ENCODE measurements at regions of chr3 and their contacts with region 1.

Region 1: GRCh38 chr3:51974963-51975851 is at the start of gene ABHD14A:
- DNase-seq: peak; percentile 85
- ATAC-seq: peak; percentile 78
- H3K4me3 ChIP-seq: peak within 1 kb of the TSS; percentile 71 to 98 (median 85)
- H3K4me3 Mint-ChIP-seq: peak within 1 kb of the TSS; percentile 100
- H3K27ac ChIP-seq: peak within 1 kb of the TSS; percentile 39 to 75
- H3K27ac Mint-ChIP-seq: peak within 1 kb of the TSS; percentile 95
- H3K4me1 ChIP-seq: peaks cover 14 to 23% of the 10 kb centered on the region in 2 donors
- H3K4me1 Mint-ChIP-seq: peaks cover 28% of the 10 kb centered on the region
- H3K27me3 ChIP-seq: no peaks in the 10 kb centered on the region
- H3K27me3 Mint-ChIP-seq: no peaks in the 10 kb centered on the region
- CTCF ChIP-seq: no peak
- total RNA-seq, gene ABHD14A: 11.9 and 14.0 TPM in 2 replicates

Region 2: GRCh38 chr3:51836606-51837005 is 138.6 kb before region 1 on chr3:
- CTCF ChIA-PET with region 1: no interaction called
- POLR2A ChIA-PET with region 1: no interaction called
- intact Hi-C with region 1: no loop called
- DNase-seq: no peak
- ATAC-seq: no peak
- H3K4me3 ChIP-seq: no peak overlapping the region
- H3K4me3 Mint-ChIP-seq: no peak overlapping the region
- H3K27ac ChIP-seq: no peak overlapping the region
- H3K27ac Mint-ChIP-seq: no peak overlapping the region
- H3K4me1 ChIP-seq: no peaks in the 10 kb centered on the region
- H3K4me1 Mint-ChIP-seq: no peaks in the 10 kb centered on the region
- H3K27me3 ChIP-seq: peaks cover 0 to 11% (median 7%) of the 10 kb centered on the region in 4 experiments
- H3K27me3 Mint-ChIP-seq: peaks cover 35% of the 10 kb centered on the region
- CTCF ChIP-seq: no peak

Region 3: DNA sequence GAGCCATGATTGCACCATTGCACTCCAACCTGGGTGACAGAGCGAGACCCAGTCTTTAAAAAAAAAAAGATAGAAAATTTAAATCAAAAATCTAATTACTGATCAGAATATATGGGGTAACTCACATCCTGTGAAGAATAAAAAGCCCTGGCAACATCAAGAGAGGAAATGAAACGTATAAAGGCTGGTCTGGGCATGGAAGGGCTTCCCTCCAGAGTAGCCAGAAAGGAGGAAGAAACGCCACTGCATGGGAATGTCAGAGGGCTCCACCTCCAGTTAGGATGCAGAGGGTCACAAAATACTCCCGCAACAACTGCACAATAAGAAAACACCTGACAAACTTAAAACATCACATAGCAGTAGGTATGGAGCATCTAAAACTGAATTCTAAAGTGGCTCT is 67.2 kb before region 1 on chr3:
- CTCF ChIA-PET with region 1: no interaction called
- POLR2A ChIA-PET with region 1: no interaction called
- intact Hi-C with region 1: no loop called
- DNase-seq: no peak
- ATAC-seq: no peak
- H3K4me3 ChIP-seq: no peak overlapping the region
- H3K4me3 Mint-ChIP-seq: no peak overlapping the region
- H3K27ac ChIP-seq: no peak overlapping the region
- H3K27ac Mint-ChIP-seq: no peak overlapping the region
- H3K4me1 ChIP-seq: no peaks in the 10 kb centered on the region
- H3K4me1 Mint-ChIP-seq: no peaks in the 10 kb centered on the region
- H3K27me3 ChIP-seq: peaks cover 0 to 3% (median 0%) of the 10 kb centered on the region in 4 experiments
- H3K27me3 Mint-ChIP-seq: peaks cover 35% of the 10 kb centered on the region
- CTCF ChIP-seq: no peak

Region 4: DNA sequence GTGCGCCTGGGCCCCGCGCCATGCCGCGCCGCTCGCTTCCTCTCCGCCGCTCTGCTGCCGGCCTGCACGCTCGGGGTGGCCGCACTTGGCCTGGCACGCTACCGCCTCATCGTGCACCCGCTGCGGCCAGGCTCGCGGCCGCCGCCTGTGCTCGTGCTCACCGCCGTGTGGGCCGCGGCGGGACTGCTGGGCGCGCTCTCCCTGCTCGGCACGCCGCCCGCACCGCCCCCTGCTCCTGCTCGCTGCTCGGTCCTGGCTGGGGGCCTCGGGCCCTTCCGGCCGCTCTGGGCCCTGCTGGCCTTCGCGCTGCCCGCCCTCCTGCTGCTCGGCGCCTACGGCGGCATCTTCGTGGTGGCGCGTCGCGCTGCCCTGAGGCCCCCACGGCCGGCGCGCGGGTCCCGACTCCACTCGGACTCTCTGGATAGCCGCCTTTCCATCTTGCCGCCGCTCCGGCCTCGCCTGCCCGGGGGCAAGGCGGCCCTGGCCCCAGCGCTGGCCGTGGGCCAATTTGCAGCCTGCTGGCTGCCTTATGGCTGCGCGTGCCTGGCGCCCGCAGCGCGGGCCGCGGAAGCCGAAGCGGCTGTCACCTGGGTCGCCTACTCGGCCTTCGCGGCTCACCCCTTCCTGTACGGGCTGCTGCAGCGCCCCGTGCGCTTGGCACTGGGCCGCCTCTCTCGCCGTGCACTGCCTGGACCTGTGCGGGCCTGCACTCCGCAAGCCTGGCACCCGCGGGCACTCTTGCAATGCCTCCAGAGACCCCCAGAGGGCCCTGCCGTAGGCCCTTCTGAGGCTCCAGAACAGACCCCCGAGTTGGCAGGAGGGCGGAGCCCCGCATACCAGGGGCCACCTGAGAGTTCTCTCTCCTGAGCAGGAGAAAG is 19.1 kb before region 1 on chr3:
- CTCF ChIA-PET with region 1: interaction called, 4 read pairs
- POLR2A ChIA-PET with region 1: interaction called, 7 read pairs
- intact Hi-C with region 1: loop called (anchors 1 kb)
- DNase-seq: peak; percentile 61
- ATAC-seq: peak; percentile 73
- H3K4me3 ChIP-seq: peak overlapping the region in 3 of 5 experiments; percentile 35 to 54 (median 51)
- H3K4me3 Mint-ChIP-seq: peak overlapping the region; percentile 71
- H3K27ac ChIP-seq: no peak overlapping the region
- H3K27ac Mint-ChIP-seq: no peak overlapping the region
- H3K4me1 ChIP-seq: peaks cover 7 to 10% of the 10 kb centered on the region in 2 donors
- H3K4me1 Mint-ChIP-seq: peaks cover 5% of the 10 kb centered on the region
- H3K27me3 ChIP-seq: peaks cover 0 to 27% (median 15%) of the 10 kb centered on the region in 4 experiments
- H3K27me3 Mint-ChIP-seq: peaks cover 17% of the 10 kb centered on the region
- CTCF ChIP-seq: peak; percentile 68

Region 5: DNA sequence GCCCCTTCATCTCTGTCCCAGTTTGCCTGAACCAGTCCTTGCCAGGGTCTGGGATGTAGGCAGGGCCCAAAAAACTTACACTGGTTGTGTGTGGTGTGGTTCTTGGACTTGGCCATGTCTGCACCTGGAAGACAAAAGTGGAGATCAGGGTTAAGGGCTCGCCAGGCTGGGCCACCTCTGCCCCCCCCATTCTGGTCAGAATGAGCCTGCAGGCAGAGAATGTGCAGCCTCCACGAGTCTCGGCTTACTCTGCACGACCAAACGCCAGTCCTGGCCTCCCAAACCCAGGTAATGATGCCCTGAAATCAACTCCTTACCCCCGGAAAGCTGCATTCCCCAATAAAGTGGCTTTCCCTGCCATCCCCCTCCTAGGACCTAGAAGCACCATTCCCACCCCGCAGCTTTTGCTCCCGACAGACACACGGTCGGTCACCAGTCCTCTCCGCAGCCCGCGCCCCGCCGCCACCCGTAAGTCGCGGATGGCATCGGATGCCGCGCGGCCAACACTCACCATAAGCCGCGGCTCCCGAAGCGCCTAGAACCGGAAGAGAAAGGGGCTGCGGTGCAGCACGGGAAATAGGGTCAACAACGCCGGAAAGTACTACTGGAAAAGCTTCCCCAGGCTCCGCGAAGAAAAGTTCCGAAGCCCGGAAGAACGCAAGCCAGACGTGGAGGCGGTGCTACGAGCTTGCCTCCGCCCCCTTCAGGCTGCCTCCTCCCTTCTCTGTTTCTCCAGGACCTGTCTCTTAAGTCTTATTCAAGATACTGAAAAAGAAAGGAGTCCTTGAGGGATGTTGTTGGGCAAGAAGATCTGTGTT is 20.3 kb after region 1 on chr3 and contains the start of gene RPL29:
- CTCF ChIA-PET with region 1: interaction called, 13 read pairs
- POLR2A ChIA-PET with region 1: interaction called, 14 read pairs
- intact Hi-C with region 1: loop called (anchors 2 kb)
- DNase-seq: peak; percentile 95
- ATAC-seq: peak; percentile 98
- H3K4me3 ChIP-seq: peak within 1 kb of the TSS; percentile 89 to 99 (median 94)
- H3K4me3 Mint-ChIP-seq: peak within 1 kb of the TSS; percentile 100
- H3K27ac ChIP-seq: peak within 1 kb of the TSS; percentile 87 to 91
- H3K27ac Mint-ChIP-seq: peak within 1 kb of the TSS; percentile 100
- H3K4me1 ChIP-seq: peaks cover 13 to 19% of the 10 kb centered on the region in 2 donors
- H3K4me1 Mint-ChIP-seq: peaks cover 33% of the 10 kb centered on the region
- H3K27me3 ChIP-seq: no peaks in the 10 kb centered on the region
- H3K27me3 Mint-ChIP-seq: peaks cover 6% of the 10 kb centered on the region
- CTCF ChIP-seq: no peak
- total RNA-seq, gene RPL29: 1,460 and 1,552 TPM in 2 replicates

Region 6: DNA sequence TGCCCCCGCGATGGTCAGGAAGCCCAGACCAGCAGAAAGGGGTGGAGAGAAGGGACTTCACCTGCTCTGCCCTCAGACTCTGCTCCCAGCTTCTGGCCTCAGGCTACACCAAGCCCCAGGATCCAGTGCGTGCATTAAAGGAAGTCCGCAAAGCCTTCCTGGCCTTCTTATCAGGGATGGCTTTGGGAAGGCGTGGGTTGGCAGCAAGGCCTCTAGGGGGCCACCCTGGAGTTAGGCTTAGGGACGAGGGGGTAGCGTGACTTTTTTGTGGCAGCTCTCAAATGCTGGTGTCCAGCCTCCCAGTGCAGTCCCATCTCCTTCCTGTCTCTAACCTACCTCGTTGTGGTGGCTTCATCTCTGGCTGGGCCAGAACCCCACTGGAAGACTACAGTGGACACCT is 39.4 kb after region 1 on chr3:
- CTCF ChIA-PET with region 1: no interaction called
- POLR2A ChIA-PET with region 1: no interaction called
- intact Hi-C with region 1: no loop called
- DNase-seq: no peak
- ATAC-seq: no peak
- H3K4me3 ChIP-seq: no peak overlapping the region
- H3K4me3 Mint-ChIP-seq: no peak overlapping the region
- H3K27ac ChIP-seq: no peak overlapping the region
- H3K27ac Mint-ChIP-seq: no peak overlapping the region
- H3K4me1 ChIP-seq: no peaks in the 10 kb centered on the region
- H3K4me1 Mint-ChIP-seq: no peaks in the 10 kb centered on the region
- H3K27me3 ChIP-seq: peaks cover 0 to 3% (median 0%) of the 10 kb centered on the region in 4 experiments
- H3K27me3 Mint-ChIP-seq: peaks cover 3% of the 10 kb centered on the region
- CTCF ChIP-seq: no peak

Measured in B cell (primary cell).